ENCODE measurements at regions of chrX and their contacts with region 1.

Region 1: GRCh38 chrX:103845165-103845653 is 13.2 kb upstream of the RAB9B start:
- DNase-seq: peak; percentile 33
- ATAC-seq: peak; percentile 96
- H3K4me3 ChIP-seq: no peak overlapping the region
- H3K27ac ChIP-seq: no peak overlapping the region
- H3K4me1 ChIP-seq: no peaks in the 10 kb centered on the region
- H3K27me3 ChIP-seq: no peaks in the 10 kb centered on the region
- CTCF ChIP-seq: peak; percentile 64 to 81 (median 72)
- EP300 ChIP-seq: no peak
- POLR2A ChIP-seq: no peak
- RAD21 ChIP-seq: peak; percentile 72

Region 2: GRCh38 chrX:103831803-103832544 is 13.2 kb before region 1 on chrX and contains the start of gene RAB9B:
- CTCF ChIA-PET with region 1: interaction called, 16 read pairs
- POLR2A ChIA-PET with region 1: interaction called, 3 read pairs
- RAD21 ChIA-PET with region 1: no interaction called
- SMC1A ChIA-PET with region 1: interaction called, 3 read pairs
- in situ Hi-C with region 1: no loop called
- intact Hi-C with region 1: no loop called
- DNase-seq: no peak
- ATAC-seq: peak; percentile 89
- H3K4me3 ChIP-seq: peak within 1 kb of the TSS; percentile 71; the same call in 1 of the 2 replicates
- H3K27ac ChIP-seq: no peak within 1 kb of the TSS
- H3K4me1 ChIP-seq: no peaks in the 10 kb centered on the region
- H3K27me3 ChIP-seq: no peaks in the 10 kb centered on the region
- CTCF ChIP-seq: no peak
- EP300 ChIP-seq: no peak
- POLR2A ChIP-seq: no peak
- RAD21 ChIP-seq: no peak
- polyA plus RNA-seq, gene RAB9B: 0.05 to 0.08 TPM

Region 3: DNA sequence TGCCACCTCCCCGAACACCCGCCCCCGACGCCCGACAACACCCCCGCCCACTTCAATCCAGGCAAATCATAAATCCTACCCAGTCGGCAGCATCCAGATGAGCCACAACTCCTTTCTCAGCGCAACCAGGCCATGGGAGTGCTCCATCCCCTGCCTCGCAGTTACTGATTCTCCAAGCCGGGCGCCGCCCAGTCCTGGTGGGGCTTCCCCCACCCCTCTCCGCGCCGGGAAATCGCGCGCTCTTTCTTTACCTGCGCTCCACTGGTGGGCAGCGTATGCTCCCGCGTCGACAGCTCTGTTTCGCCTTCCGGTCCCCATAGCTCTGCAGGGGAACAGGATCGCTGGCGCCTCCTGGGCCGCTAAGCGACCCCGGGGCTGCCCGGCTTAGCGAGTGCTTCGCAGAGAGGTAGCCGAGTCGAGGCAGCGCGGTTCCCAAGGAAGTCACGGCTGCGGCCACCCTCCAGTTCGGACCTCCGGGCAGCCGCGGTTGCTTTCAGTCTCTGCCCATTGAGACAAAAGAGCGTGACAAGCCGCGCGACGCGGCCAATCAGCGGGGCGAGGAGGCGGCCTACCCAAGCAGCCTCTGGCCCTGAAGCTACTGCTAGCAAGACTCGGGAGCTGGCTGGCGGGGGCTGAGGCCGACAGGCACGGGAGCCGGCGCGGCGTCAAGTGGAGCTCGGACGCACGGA is 73.5 kb after region 1 on chrX:
- CTCF ChIA-PET with region 1: interaction called, 18 read pairs
- POLR2A ChIA-PET with region 1: interaction called, 4 read pairs
- RAD21 ChIA-PET with region 1: interaction called, 7 read pairs
- SMC1A ChIA-PET with region 1: interaction called, 5 read pairs
- in situ Hi-C with region 1: no loop called
- intact Hi-C with region 1: loop called (anchors 2 kb)
- DNase-seq: no peak
- ATAC-seq: peak; percentile 82
- H3K4me3 ChIP-seq: peak overlapping the region; percentile 80
- H3K27ac ChIP-seq: peak overlapping the region; percentile 85
- H3K4me1 ChIP-seq: no peaks in the 10 kb centered on the region
- H3K27me3 ChIP-seq: no peaks in the 10 kb centered on the region
- CTCF ChIP-seq: no peak
- EP300 ChIP-seq: no peak
- POLR2A ChIP-seq: peak; percentile 80
- RAD21 ChIP-seq: no peak

Region 4: DNA sequence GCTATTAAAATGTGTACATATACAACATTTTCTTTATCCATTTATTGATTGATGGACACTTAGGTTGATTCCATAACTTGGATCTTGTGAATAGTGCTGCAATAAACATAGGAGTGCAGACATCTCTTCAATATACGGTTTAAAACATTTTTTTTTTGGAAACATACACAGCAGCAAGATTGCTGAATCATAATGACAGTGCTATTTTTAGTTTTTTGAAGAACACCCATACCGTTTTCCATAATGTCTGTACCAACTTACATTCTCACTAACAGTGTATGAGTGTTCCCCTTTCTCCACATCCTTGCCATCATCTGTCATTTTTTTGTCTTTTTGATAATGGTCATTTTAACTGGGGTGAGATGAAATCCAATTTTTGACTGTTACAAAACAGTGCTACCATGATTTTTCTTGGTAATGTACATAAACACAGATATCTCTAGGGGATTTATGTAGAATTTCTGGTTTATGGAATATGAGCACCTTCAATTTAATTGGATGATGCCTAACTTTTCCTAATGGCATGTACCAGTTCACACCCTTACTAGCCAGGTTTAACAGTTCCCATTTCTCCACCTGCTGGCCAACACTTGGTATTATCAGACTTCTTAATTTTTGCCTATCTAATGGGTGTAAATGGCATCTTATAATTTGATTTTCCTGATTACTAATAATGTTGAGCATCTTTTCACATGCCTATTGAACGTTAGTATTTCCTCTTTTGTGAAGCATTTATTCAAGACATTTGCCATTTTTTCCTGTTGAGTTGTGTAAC is 96.2 kb after region 1 on chrX:
- CTCF ChIA-PET with region 1: interaction called, 57 read pairs
- POLR2A ChIA-PET with region 1: no interaction called
- RAD21 ChIA-PET with region 1: interaction called, 21 read pairs
- SMC1A ChIA-PET with region 1: interaction called, 11 read pairs
- in situ Hi-C with region 1: no loop called
- intact Hi-C with region 1: loop called (anchors 1 kb)
- DNase-seq: no peak
- ATAC-seq: peak; percentile 84
- H3K4me3 ChIP-seq: no peak overlapping the region
- H3K27ac ChIP-seq: no peak overlapping the region
- H3K4me1 ChIP-seq: peaks cover 2% of the 10 kb centered on the region
- H3K27me3 ChIP-seq: no peaks in the 10 kb centered on the region
- CTCF ChIP-seq: peak; percentile 44 to 48 (median 47); a peak in 5 of 6 replicates
- EP300 ChIP-seq: no peak
- POLR2A ChIP-seq: no peak
- RAD21 ChIP-seq: peak; percentile 55; the same call in 1 of the 2 replicates

Region 5: GRCh38 chrX:104113222-104113965 is 268.2 kb after region 1 on chrX:
- CTCF ChIA-PET with region 1: interaction called, 15 read pairs
- POLR2A ChIA-PET with region 1: no interaction called
- RAD21 ChIA-PET with region 1: interaction called, 14 read pairs
- SMC1A ChIA-PET with region 1: interaction called, 8 read pairs
- in situ Hi-C with region 1: no loop called
- intact Hi-C with region 1: loop called (anchors 5 kb)
- DNase-seq: no peak
- ATAC-seq: peak; percentile 72
- H3K4me3 ChIP-seq: peak overlapping the region; percentile 61; the same call in 1 of the 2 replicates
- H3K27ac ChIP-seq: no peak overlapping the region
- H3K4me1 ChIP-seq: no peaks in the 10 kb centered on the region
- H3K27me3 ChIP-seq: no peaks in the 10 kb centered on the region
- CTCF ChIP-seq: peak; percentile 47 to 55 (median 52); a peak in 5 of 6 replicates
- EP300 ChIP-seq: no peak
- POLR2A ChIP-seq: no peak
- RAD21 ChIP-seq: peak; percentile 51

Region 6: GRCh38 chrX:104136241-104137019 is 291.2 kb after region 1 on chrX:
- CTCF ChIA-PET with region 1: interaction called, 32 read pairs
- POLR2A ChIA-PET with region 1: no interaction called
- RAD21 ChIA-PET with region 1: interaction called, 21 read pairs
- SMC1A ChIA-PET with region 1: interaction called, 16 read pairs
- in situ Hi-C with region 1: loop called (anchors 5 kb)
- intact Hi-C with region 1: loop called (anchors 1 kb)
- DNase-seq: peak; percentile 35
- ATAC-seq: peak; percentile 99
- H3K4me3 ChIP-seq: no peak overlapping the region
- H3K27ac ChIP-seq: no peak overlapping the region
- H3K4me1 ChIP-seq: no peaks in the 10 kb centered on the region
- H3K27me3 ChIP-seq: no peaks in the 10 kb centered on the region
- CTCF ChIP-seq: peak; percentile 71 to 77 (median 71)
- EP300 ChIP-seq: no peak
- POLR2A ChIP-seq: no peak
- RAD21 ChIP-seq: peak; percentile 83